ENCODE measurements at regions of chr3 and their contacts with region 1.

Region 1: DNA sequence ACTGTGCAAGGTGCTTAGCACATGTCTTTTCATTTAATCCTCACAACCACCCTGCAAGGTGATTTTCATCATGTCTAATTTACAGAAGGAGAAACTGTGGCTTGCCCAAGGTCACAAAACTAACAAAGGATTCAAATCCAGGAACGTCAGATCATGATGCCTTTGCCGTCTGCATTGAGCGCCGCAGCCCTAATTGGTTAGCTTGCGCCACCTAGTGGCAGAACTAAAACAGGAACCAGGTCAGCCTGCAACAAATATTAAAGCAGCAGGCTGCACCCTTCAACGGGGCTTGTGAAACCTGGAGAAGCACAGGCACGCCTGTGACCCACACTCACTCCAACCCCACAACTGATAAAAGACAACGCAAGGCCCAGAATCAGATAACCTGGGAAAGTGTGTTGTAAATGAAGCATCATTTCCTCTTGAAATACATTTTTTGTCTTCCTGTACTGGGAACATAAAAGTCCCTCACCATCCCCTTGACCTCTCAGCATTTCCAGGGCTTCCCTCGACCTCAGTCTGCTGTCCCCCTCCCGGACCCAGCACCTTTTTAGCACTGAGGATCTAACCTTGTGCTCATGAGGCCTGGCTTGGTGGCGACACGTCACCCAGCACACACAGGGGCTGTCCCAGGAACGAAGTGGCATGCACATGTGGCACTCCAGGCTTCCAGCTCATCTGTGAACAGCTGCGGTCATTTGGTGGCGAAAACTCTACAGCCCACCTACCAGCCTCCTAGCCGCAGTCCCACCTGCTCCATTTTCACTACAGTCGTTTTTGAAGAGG is 17.3 kb downstream of the DPH3 start:
- DNase-seq: peak; percentile 74 to 82
- H3K4me3 ChIP-seq: no peak overlapping the region
- H3K27ac ChIP-seq: no peak overlapping the region
- H3K4me1 ChIP-seq: peaks cover 0 to 6% of the 10 kb centered on the region in 2 donors
- H3K27me3 ChIP-seq: no peaks in the 10 kb centered on the region
- CTCF ChIP-seq: peak; percentile 75 to 89 (median 84)
- POLR2A ChIP-seq: no peak

Region 2: GRCh38 chr3:15629860-15630597 is 617.4 kb before region 1 on chr3:
- intact Hi-C with region 1: loop called (anchors 10 kb)
- DNase-seq: peak; percentile 57 to 63
- H3K4me3 ChIP-seq: no peak overlapping the region
- H3K27ac ChIP-seq: peak overlapping the region in 2 of 3 donors; percentile 29 to 40
- H3K4me1 ChIP-seq: peaks cover 27 to 31% of the 10 kb centered on the region in 2 donors
- H3K27me3 ChIP-seq: no peaks in the 10 kb centered on the region
- CTCF ChIP-seq: peak; percentile 27 to 93 (median 76)
- POLR2A ChIP-seq: no peak

Region 3: GRCh38 chr3:16177962-16178627 is 69.4 kb before region 1 on chr3:
- intact Hi-C with region 1: no loop called
- DNase-seq: peak; percentile 74 to 81
- H3K4me3 ChIP-seq: peak overlapping the region in 1 of 3 donors; percentile 27
- H3K27ac ChIP-seq: peak overlapping the region in 1 of 3 donors; percentile 30
- H3K4me1 ChIP-seq: peaks cover 4 to 16% of the 10 kb centered on the region in 2 donors
- H3K27me3 ChIP-seq: no peaks in the 10 kb centered on the region
- CTCF ChIP-seq: peak; percentile 75 to 96 (median 92)
- POLR2A ChIP-seq: peak in 1 of 2 donors; percentile 10

Measured in thyroid gland (tissue), 4 donors.